Posterior vena cava (tissue), 2 donors: ENCODE measurements at regions of chr2 and their contacts with region 1.

Region 1: DNA sequence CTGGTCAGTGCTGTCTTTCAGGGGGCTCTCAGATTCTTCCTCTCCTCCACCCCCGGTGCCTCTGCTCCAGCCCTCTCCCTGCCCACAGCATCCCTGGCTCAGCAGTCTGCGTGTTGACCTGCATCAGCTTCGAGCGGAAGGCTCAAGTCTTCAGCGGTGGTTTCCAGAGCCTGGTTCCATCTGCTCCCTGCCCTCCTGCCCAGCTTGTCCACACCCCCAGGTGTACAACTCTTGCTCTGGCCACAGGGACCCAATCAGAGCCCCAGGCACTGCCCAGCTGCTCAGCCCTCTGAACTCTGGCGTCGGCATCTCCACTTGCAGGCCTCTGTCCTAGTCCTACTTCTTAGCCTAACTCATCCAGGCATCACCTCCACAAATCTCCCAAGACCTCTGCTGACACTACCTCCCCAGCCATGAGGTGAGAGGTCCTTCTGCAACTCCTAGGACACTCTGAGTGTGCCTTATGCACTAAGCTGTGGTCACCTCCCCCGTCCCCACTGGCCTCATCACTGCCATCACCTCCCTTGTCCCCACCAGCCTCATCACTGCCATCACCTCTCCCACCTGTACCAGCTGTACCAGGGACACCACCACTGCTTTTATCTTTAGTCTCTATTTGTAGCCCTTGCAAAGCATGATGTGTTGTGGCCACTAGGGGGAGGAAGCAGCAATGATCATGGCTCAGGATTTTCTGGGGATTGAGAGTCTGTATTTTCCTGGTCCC is 60.9 kb downstream of the EDAR start:
- DNase-seq: no peak

Region 2: GRCh38 chr2:107325981-107326786 is 1601.9 kb before region 1 on chr2:
- intact Hi-C with region 1: loop called in 1 of 2 experiments (anchors 10 kb)
- DNase-seq: no peak

Region 3: GRCh38 chr2:108967757-108968156 is 39.7 kb after region 1 on chr2:
- intact Hi-C with region 1: loop called in 1 of 2 experiments (anchors 1 kb)
- DNase-seq: no peak

Region 4: DNA sequence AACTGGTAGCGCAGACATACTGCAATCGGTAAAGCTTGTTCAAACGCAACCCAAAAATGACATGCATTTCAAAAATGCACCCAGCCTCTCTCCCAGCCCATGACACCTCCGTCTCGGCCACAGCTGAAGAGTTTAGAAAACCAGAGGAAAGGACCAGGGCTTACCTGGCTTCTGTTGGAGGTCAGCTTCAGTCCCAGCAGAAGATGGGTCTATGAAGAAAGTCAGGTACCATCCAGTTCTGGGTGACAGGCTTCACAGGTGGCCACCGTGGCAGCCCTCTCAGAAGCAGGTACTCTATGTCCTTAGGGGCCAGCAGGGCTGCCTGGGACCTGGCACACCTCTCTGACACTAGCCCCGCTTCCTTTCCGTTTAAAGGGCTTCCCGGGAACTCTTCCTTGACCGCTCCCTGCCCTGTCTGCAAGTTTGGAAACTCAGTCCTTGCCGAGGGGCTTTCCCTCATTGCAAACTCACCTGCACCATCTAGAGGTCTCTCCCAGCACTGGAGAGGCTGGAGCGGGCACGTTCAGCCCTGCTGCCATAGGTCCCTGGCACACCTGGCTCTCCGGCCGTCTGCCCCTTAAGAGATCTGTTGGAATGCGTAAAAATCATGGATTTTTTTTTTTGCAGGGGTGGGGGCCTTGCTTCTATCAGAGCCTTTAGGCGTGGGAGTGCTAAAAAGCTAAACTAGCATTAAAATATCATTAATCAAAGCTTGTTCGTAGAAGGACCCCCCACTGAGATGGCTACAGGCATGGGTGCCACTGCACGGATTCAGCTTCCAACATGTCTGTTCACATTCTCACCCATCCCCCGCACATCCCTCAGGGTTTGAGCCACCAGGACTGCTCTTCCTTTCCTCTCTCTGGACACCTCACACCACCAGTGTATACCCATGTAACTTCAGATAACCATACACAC is 61.0 kb after region 1 on chr2 and contains the start of gene EDAR:
- intact Hi-C with region 1: no loop called
- DNase-seq: no peak
- total RNA-seq, gene EDAR: not detected